CD8-positive, alpha-beta T cell (primary cell): ENCODE measurements at regions of chr6 and their contacts with region 1.

Region 1: GRCh38 chr6:16183187-16183664 is 54.3 kb downstream of the MYLIP start:
- DNase-seq: peak in 2 of 9 experiments; percentile 44 to 62
- ATAC-seq: peak; percentile 36
- H3K4me3 ChIP-seq: no peak overlapping the region
- H3K4me3 Mint-ChIP-seq: no peak overlapping the region
- H3K27ac ChIP-seq: no peak overlapping the region
- H3K27ac Mint-ChIP-seq: no peak overlapping the region
- H3K4me1 ChIP-seq: peaks cover 17% of the 10 kb centered on the region
- H3K4me1 Mint-ChIP-seq: peaks cover 35% of the 10 kb centered on the region
- H3K27me3 ChIP-seq: no peaks in the 10 kb centered on the region
- H3K27me3 Mint-ChIP-seq: no peaks in the 10 kb centered on the region
- CTCF ChIP-seq: peak; percentile 89

Region 2: DNA sequence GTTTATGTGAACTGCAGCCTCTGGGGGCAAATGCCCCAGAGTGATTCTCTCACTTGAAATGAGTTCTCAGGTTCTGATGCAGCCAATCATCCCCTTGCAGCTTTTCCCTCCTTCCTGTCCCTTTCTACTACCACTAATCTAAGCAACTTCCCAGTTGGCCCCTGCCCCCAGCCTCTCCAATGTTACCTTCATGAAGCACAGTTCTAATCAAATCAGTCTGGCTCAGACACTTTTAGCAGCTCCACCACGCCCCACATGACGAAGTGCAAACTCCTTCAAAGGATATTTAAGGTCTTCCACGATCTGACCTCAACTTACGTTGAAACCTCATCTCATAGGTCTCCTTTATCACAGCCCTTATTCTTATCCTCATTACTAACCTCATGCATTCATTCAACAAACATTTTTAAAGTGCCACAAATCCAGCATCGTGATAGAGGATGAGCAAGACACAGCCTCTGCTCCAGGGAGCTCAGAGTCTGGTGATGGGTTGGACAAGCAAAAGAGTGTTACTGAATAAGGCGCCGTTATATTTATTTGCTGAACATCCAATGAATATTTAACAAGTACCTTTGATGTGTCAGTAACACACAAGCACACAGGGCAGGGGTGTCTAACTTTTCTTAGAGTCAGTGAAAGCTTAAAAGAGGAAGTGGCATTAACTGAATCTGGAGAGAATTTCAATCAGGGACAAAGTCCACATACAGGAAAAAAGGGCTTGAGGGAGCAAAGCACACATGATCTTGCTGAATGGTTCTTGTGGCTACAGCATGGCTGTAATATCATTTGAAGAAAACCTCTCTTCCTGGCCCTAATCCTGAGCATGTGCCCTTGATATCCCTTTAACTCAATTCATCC is 500.0 kb before region 1 on chr6:
- CTCF ChIA-PET with region 1: interaction called, 11 read pairs
- POLR2A ChIA-PET with region 1: no interaction called
- intact Hi-C with region 1: no loop called
- DNase-seq: no peak
- ATAC-seq: no peak
- H3K4me3 ChIP-seq: no peak overlapping the region
- H3K4me3 Mint-ChIP-seq: no peak overlapping the region
- H3K27ac ChIP-seq: no peak overlapping the region
- H3K27ac Mint-ChIP-seq: no peak overlapping the region
- H3K4me1 ChIP-seq: no peaks in the 10 kb centered on the region
- H3K4me1 Mint-ChIP-seq: no peaks in the 10 kb centered on the region
- H3K27me3 ChIP-seq: no peaks in the 10 kb centered on the region
- H3K27me3 Mint-ChIP-seq: no peaks in the 10 kb centered on the region
- CTCF ChIP-seq: no peak

Region 3: GRCh38 chr6:16305246-16305725 is 122.1 kb after region 1 on chr6:
- CTCF ChIA-PET with region 1: no interaction called
- POLR2A ChIA-PET with region 1: no interaction called
- intact Hi-C with region 1: no loop called
- DNase-seq: no peak
- ATAC-seq: no peak
- H3K4me3 ChIP-seq: no peak overlapping the region
- H3K4me3 Mint-ChIP-seq: no peak overlapping the region
- H3K27ac ChIP-seq: no peak overlapping the region
- H3K27ac Mint-ChIP-seq: no peak overlapping the region
- H3K4me1 ChIP-seq: no peaks in the 10 kb centered on the region
- H3K4me1 Mint-ChIP-seq: no peaks in the 10 kb centered on the region
- H3K27me3 ChIP-seq: no peaks in the 10 kb centered on the region
- H3K27me3 Mint-ChIP-seq: no peaks in the 10 kb centered on the region
- CTCF ChIP-seq: no peak